MCF 10A (cell line): ENCODE measurements at regions of chr10 and their contacts with region 1.

Region 1: GRCh38 chr10:89391917-89392756 is at the start of gene IFIT1:
- DNase-seq: peak; percentile 85
- H3K4me3 Mint-ChIP-seq: peak within 1 kb of the TSS; percentile 77
- H3K27ac Mint-ChIP-seq: peak within 1 kb of the TSS; percentile 68
- H3K4me1 Mint-ChIP-seq: no peaks in the 10 kb centered on the region
- H3K27me3 Mint-ChIP-seq: no peaks in the 10 kb centered on the region
- CTCF ChIP-seq: no peak
- total RNA-seq, gene IFIT1: 0.17 and 0.26 TPM in 2 replicates

Region 2: GRCh38 chr10:89251409-89252224 is 140.5 kb before region 1 on chr10 and contains the start of gene LIPA:
- CTCF ChIA-PET with region 1: interaction called, 3 read pairs
- POLR2A ChIA-PET with region 1: interaction called, 19 read pairs
- intact Hi-C with region 1: no loop called
- DNase-seq: peak; percentile 98
- H3K4me3 Mint-ChIP-seq: peak within 1 kb of the TSS; percentile 92
- H3K27ac Mint-ChIP-seq: peak within 1 kb of the TSS; percentile 52
- H3K4me1 Mint-ChIP-seq: peaks cover 16% of the 10 kb centered on the region
- H3K27me3 Mint-ChIP-seq: no peaks in the 10 kb centered on the region
- CTCF ChIP-seq: no peak
- total RNA-seq, gene LIPA: 18.5 and 22.3 TPM in 2 replicates

Region 3: DNA sequence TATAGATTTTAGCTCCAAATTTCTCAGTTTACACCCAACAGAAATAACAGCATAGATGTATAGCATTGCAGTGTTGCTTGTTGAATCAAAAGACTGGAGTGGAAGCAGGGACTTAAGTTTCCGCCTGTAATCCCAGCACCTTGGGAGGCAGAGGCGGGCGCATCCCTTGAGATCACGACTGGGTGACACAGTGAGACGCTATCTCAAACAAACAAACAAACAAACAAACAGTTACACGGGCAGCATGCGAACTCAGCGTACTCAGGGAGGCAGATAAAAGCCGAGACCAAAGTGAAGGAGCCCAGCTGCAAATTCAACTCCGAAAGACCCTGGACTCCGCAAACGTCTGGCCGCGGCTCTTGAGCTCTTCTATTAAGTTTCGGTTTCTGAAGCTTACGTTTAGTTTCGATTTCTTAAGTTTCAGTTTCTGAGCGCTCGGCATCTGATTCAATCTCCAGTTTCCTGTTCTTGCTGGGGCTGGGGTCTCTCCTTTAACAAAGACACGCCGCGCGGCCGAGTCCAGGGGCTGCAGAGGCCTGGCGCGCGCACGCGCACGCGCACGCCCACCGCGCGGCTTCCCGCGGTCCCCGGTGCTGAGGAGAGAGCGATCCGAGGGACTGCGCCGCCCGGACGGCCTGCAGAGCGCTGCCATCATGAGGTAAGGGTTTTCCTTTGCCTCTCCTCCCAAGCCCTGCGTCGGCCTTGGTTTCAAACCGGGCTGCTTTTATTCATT is 22.2 kb after region 1 on chr10 and contains the start of gene IFIT5:
- CTCF ChIA-PET with region 1: interaction called, 5 read pairs
- POLR2A ChIA-PET with region 1: interaction called, 51 read pairs
- intact Hi-C with region 1: loop called (anchors 1 kb)
- DNase-seq: peak; percentile 65
- H3K4me3 Mint-ChIP-seq: peak within 1 kb of the TSS; percentile 80
- H3K27ac Mint-ChIP-seq: peak within 1 kb of the TSS; percentile 94
- H3K4me1 Mint-ChIP-seq: peaks cover 14% of the 10 kb centered on the region
- H3K27me3 Mint-ChIP-seq: no peaks in the 10 kb centered on the region
- CTCF ChIP-seq: no peak
- total RNA-seq, gene IFIT5: 11.2 and 12.8 TPM in 2 replicates